ENCODE measurements at regions of chr19 and their contacts with region 1.

Region 1: DNA sequence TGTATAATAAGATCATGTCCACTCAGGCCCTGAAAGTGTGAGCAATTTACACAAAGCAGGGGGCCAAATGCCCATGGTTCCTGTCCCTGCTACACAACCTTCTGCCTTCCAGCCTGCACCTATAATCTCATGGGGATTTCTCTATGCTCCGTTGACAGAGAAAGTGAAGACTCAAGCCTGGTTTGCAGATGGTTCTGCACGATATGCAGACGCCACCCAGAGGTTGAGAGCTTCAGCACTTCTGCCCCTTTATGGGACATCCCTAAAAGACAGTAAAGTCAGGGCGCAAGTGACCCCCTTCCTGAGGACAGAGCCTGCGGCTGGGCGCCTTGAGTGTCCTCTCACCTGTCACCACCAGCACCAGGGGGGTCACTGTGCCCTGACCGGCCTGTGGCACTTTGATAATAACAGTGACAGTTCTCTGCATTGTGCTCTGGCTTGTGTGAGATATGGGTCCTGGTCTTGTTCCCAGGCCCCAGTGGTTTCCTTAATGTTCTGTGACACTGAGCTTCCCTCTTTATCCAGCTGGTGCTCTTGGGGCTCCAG is 15.1 kb downstream of the LILRA5 start:
- DNase-seq: no peak
- ATAC-seq: peak; percentile 81
- H3K4me3 ChIP-seq: no peak overlapping the region
- H3K27ac ChIP-seq: no peak overlapping the region
- H3K4me1 ChIP-seq: no peaks in the 10 kb centered on the region
- H3K27me3 ChIP-seq: peaks cover 35% of the 10 kb centered on the region
- CTCF ChIP-seq: peak; percentile 77

Region 2: GRCh38 chr19:54630782-54631181 is 332.9 kb after region 1 on chr19:
- CTCF ChIA-PET with region 1: no interaction called
- POLR2A ChIA-PET with region 1: no interaction called
- in situ Hi-C with region 1: no loop called
- intact Hi-C with region 1: loop called (anchors 5 kb)
- DNase-seq: no peak
- ATAC-seq: no peak
- H3K4me3 ChIP-seq: no peak overlapping the region
- H3K27ac ChIP-seq: no peak overlapping the region
- H3K4me1 ChIP-seq: no peaks in the 10 kb centered on the region
- H3K27me3 ChIP-seq: peaks cover 16% of the 10 kb centered on the region
- CTCF ChIP-seq: no peak

Measured in Panc1 (cell line).